CD4-positive, alpha-beta memory T cell (primary cell): ENCODE measurements at regions of chr16 and their contacts with region 1.

Region 1: DNA sequence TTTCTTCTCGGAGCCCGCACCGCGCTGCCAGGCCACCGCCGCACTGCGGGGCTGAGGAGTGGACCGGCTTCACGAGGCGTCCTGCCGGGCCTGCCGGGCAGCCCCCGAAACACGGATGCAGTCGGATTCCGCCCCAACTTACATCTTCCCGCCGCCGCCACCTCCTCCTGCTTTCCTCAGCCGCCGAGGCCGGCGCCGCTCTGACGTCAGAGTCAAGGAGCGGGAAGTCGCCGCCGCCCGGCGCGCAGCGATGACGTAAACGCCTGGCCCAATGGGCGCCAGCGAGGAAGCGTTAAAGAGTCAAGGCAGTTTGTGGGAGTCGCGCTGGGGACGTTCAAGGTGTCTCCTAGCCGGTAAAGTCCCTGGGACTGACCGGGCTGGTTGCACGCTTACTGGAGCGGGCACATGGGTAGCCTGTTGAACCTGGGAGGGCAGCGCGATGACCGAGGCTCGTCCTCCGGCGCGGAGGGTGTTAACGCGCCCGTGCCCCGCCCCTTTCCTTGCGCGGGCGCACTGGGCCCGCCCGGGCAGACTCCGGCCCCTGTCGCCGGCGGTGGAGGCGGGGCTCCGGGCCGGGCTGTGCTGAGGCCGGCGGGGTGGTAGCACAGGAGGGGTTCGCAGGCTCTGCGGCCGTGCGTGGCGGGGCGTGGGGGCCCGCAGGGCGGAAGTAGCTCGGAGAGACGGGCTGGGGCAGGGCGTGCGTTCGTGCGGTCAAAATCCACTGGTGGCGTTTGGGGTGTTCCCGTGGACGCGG is at the start of gene RNPS1:
- DNase-seq: peak; percentile 95 to 98 (median 95)
- H3K4me3 ChIP-seq: peak within 1 kb of the TSS; percentile 69 to 99
- H3K4me3 Mint-ChIP-seq: peak within 1 kb of the TSS; percentile 94 to 98 (median 96)
- H3K27ac ChIP-seq: peak within 1 kb of the TSS; percentile 88
- H3K27ac Mint-ChIP-seq: peak within 1 kb of the TSS; percentile 98 to 99 (median 98)
- H3K4me1 ChIP-seq: peaks cover 35% of the 10 kb centered on the region
- H3K4me1 Mint-ChIP-seq: peaks cover 25 to 54% (median 35%) of the 10 kb centered on the region in 4 donors
- H3K27me3 ChIP-seq: no peaks in the 10 kb centered on the region
- H3K27me3 Mint-ChIP-seq: peaks cover 0 to 3% of the 10 kb centered on the region in 2 donors
- total RNA-seq, gene RNPS1: 151 to 152 TPM

Region 2: DNA sequence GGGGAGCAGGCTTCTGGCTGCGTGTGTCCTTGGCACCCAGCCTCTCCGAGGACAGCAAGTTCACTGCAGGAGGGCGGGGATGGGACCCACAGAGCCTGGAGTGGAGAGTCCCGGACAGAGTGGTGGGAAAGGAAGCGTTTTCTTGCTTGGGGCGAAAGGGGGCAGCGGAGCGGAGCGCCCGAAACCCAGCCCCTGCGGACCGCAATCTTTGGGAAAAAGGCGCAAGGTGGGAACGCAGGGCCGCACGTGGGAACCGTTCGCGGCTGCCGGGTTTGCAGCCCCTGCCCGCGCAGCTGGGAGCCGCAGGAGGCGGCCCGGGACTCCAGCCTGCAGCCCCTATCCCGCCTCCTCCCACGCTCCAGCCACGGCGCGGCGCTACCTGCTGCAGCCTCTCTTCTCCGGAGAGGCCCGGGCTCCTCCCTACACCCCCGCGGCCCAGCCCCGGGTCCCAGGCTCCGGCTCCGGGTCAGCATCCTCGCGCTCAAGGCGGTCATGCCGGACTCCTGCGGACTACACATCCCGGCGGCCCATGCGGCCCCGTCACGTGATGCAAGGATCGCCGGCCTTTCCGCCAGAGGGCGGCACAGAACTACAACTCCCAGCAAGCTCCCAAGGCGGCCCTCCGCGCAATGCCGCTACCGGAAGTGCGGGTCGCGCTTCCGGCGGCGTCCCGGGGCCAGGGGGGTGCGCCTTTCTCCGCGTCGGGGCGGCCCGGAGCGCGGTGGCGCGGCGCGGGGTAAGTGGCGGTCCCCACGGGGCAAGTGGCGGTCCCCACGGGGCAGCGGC is 220.6 kb before region 1 on chr16 and contains the starts of genes NTHL1 and TSC2:
- CTCF ChIA-PET with region 1: no interaction called
- POLR2A ChIA-PET with region 1: no interaction called
- intact Hi-C with region 1: loop called (anchors 1 kb)
- DNase-seq: peak; percentile 88 to 91 (median 89)
- H3K4me3 ChIP-seq: peak within 1 kb of the TSS; percentile 81 to 82
- H3K4me3 Mint-ChIP-seq: peak within 1 kb of the TSS; percentile 91 to 96 (median 93)
- H3K27ac ChIP-seq: peak within 1 kb of the TSS; percentile 73
- H3K27ac Mint-ChIP-seq: peak within 1 kb of the TSS; percentile 42 to 91 (median 85)
- H3K4me1 ChIP-seq: peaks cover 24% of the 10 kb centered on the region
- H3K4me1 Mint-ChIP-seq: peaks cover 11 to 27% (median 17%) of the 10 kb centered on the region in 4 donors
- H3K27me3 ChIP-seq: no peaks in the 10 kb centered on the region
- H3K27me3 Mint-ChIP-seq: no peaks in the 10 kb centered on the region
- total RNA-seq, gene NTHL1: 9.3 to 12.0 TPM
- total RNA-seq, gene TSC2: 157 to 177 TPM

Region 3: GRCh38 chr16:2205104-2205966 is 62.8 kb before region 1 on chr16 and contains the start of gene MLST8:
- CTCF ChIA-PET with region 1: no interaction called
- POLR2A ChIA-PET with region 1: interaction called, 11 read pairs
- intact Hi-C with region 1: loop called (anchors 1 kb)
- DNase-seq: peak; percentile 87 to 99 (median 97)
- H3K4me3 ChIP-seq: peak within 1 kb of the TSS; percentile 88 to 89
- H3K4me3 Mint-ChIP-seq: peak within 1 kb of the TSS; percentile 79 to 88 (median 84)
- H3K27ac ChIP-seq: peak within 1 kb of the TSS; percentile 90
- H3K27ac Mint-ChIP-seq: peak within 1 kb of the TSS; percentile 69 to 95 (median 89)
- H3K4me1 ChIP-seq: peaks cover 26% of the 10 kb centered on the region
- H3K4me1 Mint-ChIP-seq: peaks cover 12 to 29% (median 18%) of the 10 kb centered on the region in 4 donors
- H3K27me3 ChIP-seq: no peaks in the 10 kb centered on the region
- H3K27me3 Mint-ChIP-seq: peaks cover 0 to under 1% of the 10 kb centered on the region in 2 donors
- total RNA-seq, gene MLST8: 28.1 to 31.1 TPM

Region 4: DNA sequence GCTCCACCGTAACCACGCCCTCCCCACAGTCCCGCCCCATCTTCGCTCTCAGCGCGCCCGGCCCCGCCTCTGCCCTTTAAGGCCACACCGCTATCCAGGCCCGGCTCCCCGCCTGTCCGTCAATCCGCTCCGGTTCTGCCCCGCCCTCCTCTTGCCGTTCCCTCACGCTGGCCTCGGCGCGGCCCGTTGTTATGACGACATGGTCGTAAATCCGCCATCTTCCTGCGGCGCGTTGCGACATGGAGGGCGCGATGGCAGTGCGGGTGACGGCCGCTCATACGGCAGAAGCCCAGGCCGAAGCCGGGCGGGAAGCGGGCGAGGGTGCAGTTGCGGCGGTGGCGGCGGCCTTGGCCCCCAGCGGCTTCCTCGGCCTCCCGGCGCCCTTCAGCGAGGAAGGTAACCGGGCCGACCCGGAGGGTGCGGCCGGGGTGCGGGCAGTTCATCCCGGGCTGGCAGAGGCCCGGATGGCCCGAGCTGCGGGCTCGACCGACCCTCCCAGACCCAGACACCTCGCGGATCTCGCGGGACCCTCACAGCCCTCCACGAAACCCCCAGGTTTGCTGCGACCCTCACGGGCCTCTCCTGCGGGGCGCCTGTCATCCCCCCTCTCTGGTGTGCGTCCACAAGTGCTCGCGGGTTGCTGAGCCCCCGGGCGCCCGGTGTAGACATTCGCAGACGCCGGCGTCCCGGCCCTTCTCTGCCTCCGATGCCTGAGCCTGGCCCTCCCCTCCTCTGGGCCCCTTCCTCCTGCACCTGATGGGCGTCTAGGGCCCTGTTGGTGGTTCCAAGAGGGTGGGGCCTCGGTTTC is 44.5 kb before region 1 on chr16 and contains the start of gene E4F1:
- CTCF ChIA-PET with region 1: no interaction called
- POLR2A ChIA-PET with region 1: no interaction called
- intact Hi-C with region 1: loop called (anchors 1 kb)
- DNase-seq: peak; percentile 97 to 99 (median 99)
- H3K4me3 ChIP-seq: peak within 1 kb of the TSS; percentile 81 to 84
- H3K4me3 Mint-ChIP-seq: peak within 1 kb of the TSS; percentile 85 to 93 (median 90)
- H3K27ac ChIP-seq: peak within 1 kb of the TSS; percentile 90
- H3K27ac Mint-ChIP-seq: peak within 1 kb of the TSS; percentile 82 to 94 (median 89)
- H3K4me1 ChIP-seq: peaks cover 14% of the 10 kb centered on the region
- H3K4me1 Mint-ChIP-seq: peaks cover 7 to 27% (median 19%) of the 10 kb centered on the region in 4 donors
- H3K27me3 ChIP-seq: no peaks in the 10 kb centered on the region
- H3K27me3 Mint-ChIP-seq: no peaks in the 10 kb centered on the region
- total RNA-seq, gene E4F1: 46.5 to 49.7 TPM

Region 5: GRCh38 chr16:2340564-2341455 is 72.7 kb after region 1 on chr16 and contains the start of gene ABCA3:
- CTCF ChIA-PET with region 1: no interaction called
- POLR2A ChIA-PET with region 1: interaction called, 4 read pairs
- intact Hi-C with region 1: loop called (anchors 5 kb)
- DNase-seq: peak; percentile 85 to 96 (median 93)
- H3K4me3 ChIP-seq: peak within 1 kb of the TSS; percentile 1 to 45
- H3K4me3 Mint-ChIP-seq: peak within 1 kb of the TSS; percentile 84 to 88 (median 86)
- H3K27ac ChIP-seq: no peak within 1 kb of the TSS
- H3K27ac Mint-ChIP-seq: peak within 1 kb of the TSS in 6 of 7 donors; percentile 61 to 84 (median 77)
- H3K4me1 ChIP-seq: peaks cover 17% of the 10 kb centered on the region
- H3K4me1 Mint-ChIP-seq: peaks cover 9 to 26% (median 15%) of the 10 kb centered on the region in 4 donors
- H3K27me3 ChIP-seq: no peaks in the 10 kb centered on the region
- H3K27me3 Mint-ChIP-seq: peaks cover 2% of the 10 kb centered on the region in 2 donors
- total RNA-seq, gene ABCA3: 8.5 to 12.7 TPM

Region 6: DNA sequence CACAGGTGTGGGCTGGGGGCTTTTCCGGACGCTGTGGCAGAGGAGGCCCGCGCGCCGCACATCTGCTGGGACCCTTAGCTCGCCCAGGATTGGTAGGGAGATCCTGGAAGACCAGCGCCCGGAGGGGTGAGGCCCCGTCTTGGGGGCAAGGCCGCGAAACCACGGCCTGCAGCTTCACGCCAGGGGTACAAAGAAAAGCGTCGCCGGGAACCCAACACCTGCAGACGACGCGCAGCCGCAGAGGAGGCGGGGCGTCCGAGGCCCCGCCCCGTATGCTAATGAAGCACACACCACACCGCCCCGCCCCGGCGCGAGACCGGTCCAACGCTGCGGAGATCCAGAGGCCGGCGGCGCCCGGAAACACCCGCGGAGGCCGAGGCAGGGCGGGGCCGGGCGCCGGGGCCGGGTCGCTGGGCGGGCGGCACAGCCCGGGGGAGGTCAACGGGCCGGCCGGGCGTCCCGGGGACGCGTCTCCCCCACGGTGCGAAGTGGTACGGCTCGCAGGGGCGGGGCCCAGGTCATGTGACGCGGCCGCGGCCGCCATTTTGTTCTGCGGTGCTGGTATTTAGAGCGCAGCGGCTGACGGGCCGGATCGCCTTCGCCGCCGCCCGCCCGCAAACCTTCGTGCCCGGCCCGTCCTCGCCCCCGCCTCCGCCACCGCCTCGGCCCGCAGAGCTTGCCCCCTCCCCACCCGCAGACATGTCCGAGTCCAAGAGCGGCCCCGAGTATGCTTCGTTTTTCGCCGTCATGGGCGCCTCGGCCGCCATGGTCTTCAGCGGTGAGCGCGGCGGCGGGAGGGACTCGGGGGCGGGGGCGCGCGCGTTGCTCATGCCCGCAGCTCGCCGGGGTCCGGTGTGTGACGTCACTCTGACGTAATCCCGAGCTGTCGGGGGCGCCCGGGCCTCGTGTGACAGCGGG is 245.6 kb after region 1 on chr16 and contains the start of gene ATP6V0C:
- CTCF ChIA-PET with region 1: no interaction called
- POLR2A ChIA-PET with region 1: interaction called, 3 read pairs
- intact Hi-C with region 1: loop called (anchors 10 kb)
- DNase-seq: peak; percentile 90 to 97 (median 94)
- H3K4me3 ChIP-seq: peak within 1 kb of the TSS; percentile 74 to 77
- H3K4me3 Mint-ChIP-seq: peak within 1 kb of the TSS; percentile 90 to 96 (median 92)
- H3K27ac ChIP-seq: peak within 1 kb of the TSS; percentile 94
- H3K27ac Mint-ChIP-seq: peak within 1 kb of the TSS; percentile 91 to 98 (median 97)
- H3K4me1 ChIP-seq: peaks cover 48% of the 10 kb centered on the region
- H3K4me1 Mint-ChIP-seq: peaks cover 32 to 64% (median 46%) of the 10 kb centered on the region in 4 donors
- H3K27me3 ChIP-seq: no peaks in the 10 kb centered on the region
- H3K27me3 Mint-ChIP-seq: no peaks in the 10 kb centered on the region
- total RNA-seq, gene ATP6V0C: 125 to 129 TPM

Region 7: DNA sequence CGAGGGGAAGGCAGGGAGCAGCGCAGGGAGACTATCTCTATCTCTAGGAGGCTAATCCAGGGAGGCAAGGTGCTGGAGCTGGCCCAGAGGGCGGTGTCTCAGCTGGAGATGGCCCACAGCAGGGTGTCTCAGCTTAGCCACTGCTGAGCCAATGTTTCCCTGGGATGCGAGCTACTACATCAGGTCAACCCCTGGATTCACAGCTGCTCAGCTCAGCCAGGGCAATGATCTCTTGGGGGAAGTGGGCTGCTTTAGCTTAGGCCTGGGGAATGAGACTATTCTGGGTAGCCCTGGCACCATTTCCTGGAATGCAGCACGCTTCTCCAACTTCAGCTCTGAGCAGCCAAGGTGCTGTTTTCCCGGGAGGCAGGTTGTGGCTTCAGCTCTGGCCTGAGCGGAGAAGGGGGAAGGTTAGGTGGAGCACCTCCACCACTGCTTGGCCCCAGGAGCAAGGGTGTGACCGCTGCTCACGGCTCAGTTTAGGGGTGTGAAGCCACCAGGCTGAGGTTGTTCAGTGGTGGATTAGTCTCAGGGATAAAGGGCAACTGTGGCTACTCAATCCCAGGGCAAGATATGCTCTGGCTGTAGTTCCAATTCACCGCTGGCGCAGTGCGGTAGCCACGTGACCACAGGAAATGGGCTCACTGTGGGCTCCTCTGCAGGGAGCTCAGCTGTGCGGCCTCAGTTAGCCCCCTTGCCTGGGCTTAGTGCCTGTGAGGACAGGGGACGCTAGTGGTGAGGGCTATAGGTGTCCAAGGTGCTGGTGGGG is 543.8 kb after region 1 on chr16:
- CTCF ChIA-PET with region 1: no interaction called
- POLR2A ChIA-PET with region 1: no interaction called
- intact Hi-C with region 1: no loop called
- DNase-seq: no peak
- H3K4me3 ChIP-seq: no peak overlapping the region
- H3K4me3 Mint-ChIP-seq: no peak overlapping the region
- H3K27ac ChIP-seq: no peak overlapping the region
- H3K27ac Mint-ChIP-seq: no peak overlapping the region
- H3K4me1 ChIP-seq: no peaks in the 10 kb centered on the region
- H3K4me1 Mint-ChIP-seq: no peaks in the 10 kb centered on the region
- H3K27me3 ChIP-seq: no peaks in the 10 kb centered on the region
- H3K27me3 Mint-ChIP-seq: peaks cover 8 to 16% of the 10 kb centered on the region in 2 donors